CD4-positive, alpha-beta memory T cell (primary cell): ENCODE measurements at regions of chr1 and their contacts with region 1.

Region 1: GRCh38 chr1:181318022-181318857 is 165.1 kb upstream of the CACNA1E start:
- DNase-seq: peak in 1 of 5 donors; percentile 11
- H3K4me3 ChIP-seq: peak overlapping the region in 1 of 2 donors; percentile 5
- H3K4me3 Mint-ChIP-seq: peak overlapping the region; percentile 60 to 90 (median 80)
- H3K27ac ChIP-seq: no peak overlapping the region
- H3K27ac Mint-ChIP-seq: no peak overlapping the region
- H3K4me1 ChIP-seq: peaks cover 12% of the 10 kb centered on the region
- H3K4me1 Mint-ChIP-seq: peaks cover 19 to 27% (median 21%) of the 10 kb centered on the region in 4 donors
- H3K27me3 ChIP-seq: peaks cover 22% of the 10 kb centered on the region
- H3K27me3 Mint-ChIP-seq: peaks cover 34 to 51% of the 10 kb centered on the region in 2 donors

Region 2: DNA sequence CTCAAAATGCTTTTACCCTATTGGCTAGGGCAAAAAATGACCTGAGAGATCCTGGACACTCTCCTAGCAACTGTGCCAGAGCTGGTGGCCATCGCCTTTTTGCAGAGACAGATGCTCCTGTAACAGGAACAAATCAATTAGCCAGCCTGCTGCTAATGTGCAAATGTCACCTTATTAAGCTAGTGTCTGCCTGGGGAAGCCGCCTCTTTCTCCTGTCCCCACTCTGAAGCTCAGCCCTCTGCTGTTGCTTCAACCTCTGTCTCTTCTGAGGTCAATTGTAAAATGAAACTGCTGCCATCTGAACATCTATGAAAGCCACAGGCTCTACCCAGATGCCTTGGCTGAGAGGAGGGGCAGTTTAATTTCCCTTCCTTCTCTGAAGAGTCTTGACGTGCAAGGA is 79.6 kb after region 1 on chr1:
- CTCF ChIA-PET with region 1: no interaction called
- POLR2A ChIA-PET with region 1: interaction called, 3 read pairs
- intact Hi-C with region 1: loop called (anchors 5 kb)
- DNase-seq: peak; percentile 41 to 56 (median 50)
- H3K4me3 ChIP-seq: peak overlapping the region; percentile 13 to 25
- H3K4me3 Mint-ChIP-seq: peak overlapping the region; percentile 65 to 86 (median 74)
- H3K27ac ChIP-seq: peak overlapping the region; percentile 37
- H3K27ac Mint-ChIP-seq: peak overlapping the region in 5 of 7 donors; percentile 78 to 97 (median 95)
- H3K4me1 ChIP-seq: peaks cover 64% of the 10 kb centered on the region
- H3K4me1 Mint-ChIP-seq: peaks cover 9 to 35% (median 29%) of the 10 kb centered on the region in 4 donors
- H3K27me3 ChIP-seq: no peaks in the 10 kb centered on the region
- H3K27me3 Mint-ChIP-seq: no peaks in the 10 kb centered on the region